Natural killer cell (primary cell): ENCODE measurements at regions of chr1 and their contacts with region 1.

Region 1: DNA sequence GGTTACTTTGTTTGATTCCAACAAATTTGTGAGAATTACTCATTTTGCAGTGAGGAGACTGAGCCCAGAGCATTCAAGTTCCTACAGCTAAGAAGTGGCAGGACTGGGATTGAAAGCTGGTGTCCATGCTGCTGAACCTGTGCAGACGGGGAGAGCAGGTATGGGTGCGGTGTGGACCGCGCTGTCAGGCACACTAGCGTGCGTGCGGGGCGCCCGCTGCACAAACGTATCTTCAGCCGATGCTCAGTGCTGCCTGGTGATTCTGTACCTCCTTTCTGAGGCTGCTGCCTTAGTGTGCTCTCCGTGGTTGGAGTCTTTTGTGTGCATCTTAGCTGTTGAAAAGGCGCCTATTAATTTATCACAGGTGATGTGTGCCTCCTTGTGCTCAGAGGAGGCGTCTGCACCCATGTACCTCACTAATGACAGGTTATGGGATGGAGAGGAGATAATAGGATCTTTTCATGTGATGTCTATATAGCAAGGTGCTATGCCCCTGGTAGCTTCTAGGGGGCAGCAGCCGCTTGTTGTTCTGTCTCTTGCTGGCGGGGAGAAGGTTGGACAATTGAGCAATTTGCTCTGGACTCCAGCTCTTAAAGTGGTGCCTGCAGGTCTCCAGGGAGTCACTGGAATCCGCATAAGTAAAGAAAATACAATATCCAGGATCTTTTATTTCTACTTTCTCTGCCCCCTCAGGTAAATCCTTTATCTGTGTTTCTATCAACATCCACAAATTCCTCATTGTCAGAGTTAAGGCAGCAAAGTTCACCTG is 32.5 kb downstream of the PEX14 start:
- DNase-seq: peak; percentile 44 to 74
- ATAC-seq: peak; percentile 48 to 73 (median 58)
- H3K4me3 ChIP-seq: no peak overlapping the region
- H3K4me3 Mint-ChIP-seq: no peak overlapping the region
- H3K27ac ChIP-seq: no peak overlapping the region
- H3K27ac Mint-ChIP-seq: peak overlapping the region; percentile 68 to 73
- H3K4me1 ChIP-seq: peaks cover 24% of the 10 kb centered on the region
- H3K4me1 Mint-ChIP-seq: peaks cover 42% of the 10 kb centered on the region in 2 donors
- H3K27me3 ChIP-seq: no peaks in the 10 kb centered on the region
- H3K27me3 Mint-ChIP-seq: no peaks in the 10 kb centered on the region
- CTCF ChIP-seq: peak; percentile 89

Region 2: DNA sequence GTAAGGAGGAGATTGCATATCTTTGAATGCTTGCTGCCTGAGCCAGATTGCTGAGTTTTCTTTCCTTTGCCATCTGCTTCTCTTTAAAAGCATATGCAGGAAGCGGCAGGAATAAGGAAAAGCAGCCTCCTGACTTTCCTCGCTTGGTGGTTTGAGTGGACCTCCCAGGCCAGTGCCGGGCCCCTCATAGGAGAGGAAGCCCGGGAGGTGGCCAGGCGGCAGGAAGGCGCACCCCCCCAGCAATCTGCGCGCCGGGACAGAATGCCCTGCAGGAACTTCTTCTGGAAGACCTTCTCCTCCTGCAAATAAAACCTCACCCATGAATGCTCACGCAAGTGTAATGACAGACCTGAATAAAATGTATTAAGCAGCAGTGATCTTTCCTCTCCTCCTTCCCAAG is 56.0 kb before region 1 on chr1:
- intact Hi-C with region 1: no loop called
- DNase-seq: no peak
- ATAC-seq: no peak
- H3K4me3 ChIP-seq: no peak overlapping the region
- H3K4me3 Mint-ChIP-seq: no peak overlapping the region
- H3K27ac ChIP-seq: no peak overlapping the region
- H3K27ac Mint-ChIP-seq: no peak overlapping the region
- H3K4me1 ChIP-seq: no peaks in the 10 kb centered on the region
- H3K4me1 Mint-ChIP-seq: peaks cover 6 to 7% of the 10 kb centered on the region in 2 donors
- H3K27me3 ChIP-seq: no peaks in the 10 kb centered on the region
- H3K27me3 Mint-ChIP-seq: peaks cover 5 to 20% of the 10 kb centered on the region in 2 donors
- CTCF ChIP-seq: no peak

Region 3: GRCh38 chr1:10525208-10525607 is 17.9 kb after region 1 on chr1:
- intact Hi-C with region 1: loop called (anchors 1 kb)
- DNase-seq: peak; percentile 54 to 71
- ATAC-seq: peak; percentile 87 to 94 (median 92)
- H3K4me3 ChIP-seq: no peak overlapping the region
- H3K4me3 Mint-ChIP-seq: peak overlapping the region; percentile 81
- H3K27ac ChIP-seq: peak overlapping the region; percentile 86
- H3K27ac Mint-ChIP-seq: peak overlapping the region; percentile 94 to 98
- H3K4me1 ChIP-seq: peaks cover 14% of the 10 kb centered on the region
- H3K4me1 Mint-ChIP-seq: peaks cover 42 to 58% of the 10 kb centered on the region in 2 donors
- H3K27me3 ChIP-seq: no peaks in the 10 kb centered on the region
- H3K27me3 Mint-ChIP-seq: no peaks in the 10 kb centered on the region
- CTCF ChIP-seq: no peak

Region 4: GRCh38 chr1:10637834-10638558 is 130.7 kb after region 1 on chr1:
- intact Hi-C with region 1: loop called (anchors 1 kb)
- DNase-seq: no peak
- ATAC-seq: peak in 2 of 3 donors; percentile 58 to 65
- H3K4me3 ChIP-seq: no peak overlapping the region
- H3K4me3 Mint-ChIP-seq: no peak overlapping the region
- H3K27ac ChIP-seq: no peak overlapping the region
- H3K27ac Mint-ChIP-seq: no peak overlapping the region
- H3K4me1 ChIP-seq: peaks cover 6% of the 10 kb centered on the region
- H3K4me1 Mint-ChIP-seq: peaks cover 0 to 5% of the 10 kb centered on the region in 2 donors
- H3K27me3 ChIP-seq: no peaks in the 10 kb centered on the region
- H3K27me3 Mint-ChIP-seq: no peaks in the 10 kb centered on the region
- CTCF ChIP-seq: no peak

Region 5: DNA sequence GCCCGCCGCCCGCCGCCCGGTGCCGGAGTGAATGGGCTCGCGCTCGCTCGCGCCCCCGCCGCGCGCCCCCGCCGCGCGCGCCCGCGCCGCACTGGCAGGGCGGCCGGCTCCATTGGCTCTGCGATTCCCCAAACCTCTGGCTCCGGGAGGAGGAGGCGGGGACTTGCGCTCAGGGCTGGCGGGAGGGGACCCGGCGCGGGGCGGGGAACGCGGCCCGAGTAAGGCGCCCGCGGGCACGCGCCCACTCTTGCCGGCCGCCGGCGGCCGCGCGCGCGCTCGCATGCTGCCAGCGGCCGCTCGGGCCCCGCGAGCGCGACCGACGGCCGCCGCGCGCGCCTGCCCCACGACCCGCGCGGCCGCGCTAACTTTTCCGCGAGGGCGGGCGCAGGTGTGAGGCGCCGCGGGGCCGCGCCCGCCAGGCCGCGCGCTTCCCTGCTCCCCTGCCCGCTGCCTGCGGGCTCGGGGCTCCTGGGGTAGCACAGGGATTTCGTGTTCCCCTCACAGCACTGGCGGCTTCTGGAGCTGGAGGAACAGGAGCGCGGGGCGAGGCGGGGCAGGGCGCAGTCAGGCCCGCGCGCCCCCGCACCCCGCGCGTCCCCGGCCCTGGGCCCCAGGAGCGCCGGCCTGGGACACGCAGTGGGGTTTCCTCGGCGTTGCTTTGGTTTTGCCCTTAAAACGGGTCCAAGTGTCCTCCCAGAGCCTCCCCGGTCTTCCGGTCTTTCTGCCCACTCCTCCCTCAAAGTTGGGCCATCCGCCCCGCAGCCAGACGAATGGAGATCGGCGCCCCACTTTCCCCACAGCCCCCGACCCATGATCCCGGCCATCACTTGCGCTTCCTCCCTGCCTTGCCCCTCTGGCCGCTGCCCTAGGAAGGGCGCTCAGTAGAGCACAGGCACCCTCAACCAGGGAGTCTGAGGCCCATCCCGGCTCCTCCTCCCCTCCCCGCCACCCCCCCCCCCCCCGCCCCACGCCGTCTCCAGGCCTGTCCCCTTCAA is 187.6 kb after region 1 on chr1:
- intact Hi-C with region 1: loop called (anchors 5 kb)
- DNase-seq: peak; percentile 80 to 90
- ATAC-seq: peak; percentile 60 to 85 (median 68)
- H3K4me3 ChIP-seq: peak overlapping the region; percentile 15
- H3K4me3 Mint-ChIP-seq: peak overlapping the region; percentile 86
- H3K27ac ChIP-seq: peak overlapping the region; percentile 45
- H3K27ac Mint-ChIP-seq: peak overlapping the region; percentile 82 to 92
- H3K4me1 ChIP-seq: peaks cover 26% of the 10 kb centered on the region
- H3K4me1 Mint-ChIP-seq: peaks cover 16 to 39% of the 10 kb centered on the region in 2 donors
- H3K27me3 ChIP-seq: no peaks in the 10 kb centered on the region
- H3K27me3 Mint-ChIP-seq: no peaks in the 10 kb centered on the region
- CTCF ChIP-seq: no peak

Region 6: DNA sequence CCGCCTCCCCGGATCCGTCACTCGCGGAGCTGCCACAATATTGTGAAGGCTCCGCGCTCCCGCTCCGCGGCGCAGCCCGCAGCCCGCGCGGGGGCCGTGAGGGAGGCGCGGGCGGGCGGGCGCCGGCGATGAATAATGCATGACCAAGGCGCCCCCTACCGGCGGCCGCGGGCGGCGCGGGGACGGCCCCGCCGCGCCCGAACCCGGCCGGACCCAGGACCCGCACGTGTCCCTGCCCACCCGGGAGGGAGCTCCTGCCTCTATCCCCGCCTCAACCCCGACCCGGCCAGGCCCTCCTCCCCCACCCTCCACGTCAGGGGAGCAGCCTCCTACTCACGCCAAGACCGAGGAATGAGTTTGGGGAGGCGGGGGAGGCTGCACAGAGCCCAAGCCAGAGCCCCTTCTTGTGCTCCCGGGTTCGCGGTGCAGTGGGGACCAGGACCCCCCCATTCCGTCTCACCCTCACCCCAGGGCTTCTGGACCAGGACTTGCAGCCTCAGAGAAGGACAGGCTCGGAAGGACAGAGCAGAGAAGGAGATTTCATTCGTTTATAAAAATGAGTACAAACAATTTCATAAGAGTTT is 359.9 kb after region 1 on chr1:
- intact Hi-C with region 1: loop called (anchors 1 kb)
- DNase-seq: peak; percentile 75 to 77
- ATAC-seq: peak; percentile 79 to 95 (median 92)
- H3K4me3 ChIP-seq: no peak overlapping the region
- H3K4me3 Mint-ChIP-seq: peak overlapping the region; percentile 61
- H3K27ac ChIP-seq: no peak overlapping the region
- H3K27ac Mint-ChIP-seq: no peak overlapping the region
- H3K4me1 ChIP-seq: peaks cover 13% of the 10 kb centered on the region
- H3K4me1 Mint-ChIP-seq: peaks cover 5 to 16% of the 10 kb centered on the region in 2 donors
- H3K27me3 ChIP-seq: peaks cover 32% of the 10 kb centered on the region
- H3K27me3 Mint-ChIP-seq: peaks cover 48 to 56% of the 10 kb centered on the region in 2 donors
- CTCF ChIP-seq: peak; percentile 86